Left cardiac atrium (tissue), 4 donors: ENCODE measurements at regions of chr11 and their contacts with region 1.

Region 1: DNA sequence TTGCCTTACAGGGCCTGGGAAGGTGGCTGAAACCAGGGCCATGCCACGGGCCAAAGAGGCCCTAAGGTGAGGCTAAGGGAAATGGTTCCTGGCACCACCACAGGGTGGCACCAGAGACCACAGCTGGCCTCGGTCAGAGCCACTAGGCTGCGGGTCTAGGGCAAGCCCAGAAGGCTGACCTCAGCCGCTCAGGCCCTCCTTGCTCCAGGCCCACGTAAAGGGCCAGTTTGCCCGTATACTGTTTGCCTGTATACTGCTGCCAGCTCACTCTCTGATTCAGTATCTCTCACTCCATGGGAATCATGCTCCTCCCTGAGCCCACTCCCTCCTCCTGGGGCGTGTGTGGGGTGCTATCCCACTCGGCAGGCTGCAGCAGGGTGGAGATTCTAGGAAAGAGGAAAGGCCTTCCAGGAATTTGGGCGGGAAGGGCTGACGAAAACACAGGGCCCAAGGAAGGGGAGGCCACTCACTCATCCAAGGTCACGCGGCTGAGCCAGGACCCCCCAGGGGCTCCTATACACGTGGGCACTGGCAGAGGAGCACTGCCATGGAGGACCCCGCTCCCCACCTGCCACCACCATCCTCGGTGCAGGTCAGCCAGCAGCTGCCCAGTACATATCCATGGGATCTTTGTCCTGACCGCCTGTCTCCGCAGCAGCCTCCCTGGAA is 62.4 kb downstream of the NECTIN1 start:
- DNase-seq: peak; percentile 78
- ATAC-seq: peak; percentile 91 to 92

Region 2: DNA sequence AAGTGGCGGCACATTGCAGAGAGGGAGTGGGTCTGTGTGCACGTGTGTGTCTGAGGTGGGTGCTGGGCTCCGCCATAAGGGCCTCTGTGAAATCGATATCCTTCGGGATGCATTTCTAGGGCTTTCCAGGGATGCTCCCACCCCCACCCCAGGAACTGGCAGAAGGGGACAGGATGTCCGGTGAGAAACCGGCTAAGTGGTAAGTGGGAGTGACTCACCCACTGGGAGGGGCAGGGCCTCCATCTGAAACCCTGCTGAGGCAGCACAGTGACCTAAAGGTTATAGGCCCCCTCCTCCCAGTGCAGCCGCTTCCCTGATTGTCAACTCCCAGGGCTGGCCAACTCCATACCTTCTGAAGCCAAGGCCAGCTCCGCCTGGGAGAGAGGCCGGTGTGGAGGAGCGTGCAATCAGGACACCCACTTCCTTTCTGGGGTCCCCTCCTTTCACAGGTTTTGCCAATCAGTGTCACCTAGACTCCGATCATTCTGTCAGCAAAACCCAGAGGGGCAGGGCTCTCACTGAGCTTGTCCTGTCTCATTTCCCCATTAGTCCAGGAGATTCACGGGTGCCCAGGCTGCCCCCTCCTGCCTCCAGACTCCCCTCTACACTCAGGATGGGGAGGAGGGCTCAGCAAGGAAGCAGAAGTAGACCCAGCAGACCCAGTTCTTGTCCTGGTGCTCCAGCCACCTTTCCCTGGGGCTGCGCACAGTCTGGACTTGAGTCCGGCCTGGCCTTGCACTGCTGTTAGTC is 17.9 kb after region 1 on chr11:
- intact Hi-C with region 1: no loop called
- DNase-seq: peak; percentile 36
- ATAC-seq: peak in 1 of 2 donors; percentile 56

Region 3: GRCh38 chr11:119728651-119729580 is 62.3 kb after region 1 on chr11 and contains the start of gene NECTIN1:
- intact Hi-C with region 1: loop called (anchors 5 kb)
- DNase-seq: peak; percentile 90
- ATAC-seq: peak; percentile 93 to 95
- total RNA-seq, gene NECTIN1: 6.6 to 8.8 TPM

Region 4: DNA sequence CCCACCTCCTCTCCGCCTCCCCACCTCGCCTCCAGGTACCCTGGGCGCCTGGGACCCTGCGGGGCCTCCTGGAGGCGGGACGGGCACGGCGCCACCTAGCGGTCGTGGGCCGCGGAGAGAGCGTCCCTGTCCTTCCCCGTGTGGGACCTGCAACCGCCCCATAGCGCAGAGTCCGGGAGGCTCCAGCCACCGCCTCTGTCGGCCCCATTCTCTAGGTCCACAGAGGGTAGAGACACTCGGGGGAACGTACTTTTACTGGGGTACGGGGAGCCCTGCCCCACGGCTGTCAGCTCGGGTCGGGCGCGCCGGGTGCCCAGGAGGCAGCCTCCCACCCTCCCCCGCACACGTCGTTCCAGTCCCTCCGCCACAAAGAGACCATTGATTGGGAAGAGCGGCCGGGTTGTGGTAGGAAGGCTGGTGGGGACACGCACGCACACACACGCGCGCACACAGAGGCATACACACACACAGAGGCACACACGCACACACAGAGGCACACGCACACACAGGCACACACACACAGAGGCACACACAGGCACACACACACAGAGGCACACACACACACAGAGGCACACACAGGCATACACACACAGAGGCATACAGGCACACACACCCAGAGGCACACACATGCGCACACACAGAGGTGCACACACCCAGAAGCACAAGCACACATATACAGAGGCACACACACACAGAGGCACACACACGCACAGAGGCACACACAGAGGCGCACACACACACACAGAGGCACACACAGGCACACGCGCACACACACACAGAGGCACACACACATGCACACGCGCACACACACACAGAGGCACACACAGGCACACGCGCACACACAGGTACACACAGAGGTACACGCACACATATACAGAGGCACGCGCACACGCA is 75.0 kb after region 1 on chr11:
- intact Hi-C with region 1: loop called in 1 of 2 experiments (anchors 5 kb)
- DNase-seq: peak; percentile 65
- ATAC-seq: peak; percentile 69 to 78

Region 5: GRCh38 chr11:120013325-120014270 is 347.0 kb after region 1 on chr11:
- intact Hi-C with region 1: loop called (anchors 5 to 10 kb)
- DNase-seq: peak; percentile 39
- ATAC-seq: peak; percentile 76 to 89

Region 6: GRCh38 chr11:120089036-120090001 is 422.7 kb after region 1 on chr11:
- intact Hi-C with region 1: no loop called
- DNase-seq: no peak
- ATAC-seq: peak; percentile 17 to 61

Region 7: GRCh38 chr11:120108154-120108865 is 441.7 kb after region 1 on chr11:
- intact Hi-C with region 1: loop called (anchors 1 to 5 kb)
- DNase-seq: peak; percentile 72
- ATAC-seq: peak; percentile 90 to 93